GM12878 (cell line): ENCODE measurements at regions of chr1 and their contacts with region 1.

Region 1: DNA sequence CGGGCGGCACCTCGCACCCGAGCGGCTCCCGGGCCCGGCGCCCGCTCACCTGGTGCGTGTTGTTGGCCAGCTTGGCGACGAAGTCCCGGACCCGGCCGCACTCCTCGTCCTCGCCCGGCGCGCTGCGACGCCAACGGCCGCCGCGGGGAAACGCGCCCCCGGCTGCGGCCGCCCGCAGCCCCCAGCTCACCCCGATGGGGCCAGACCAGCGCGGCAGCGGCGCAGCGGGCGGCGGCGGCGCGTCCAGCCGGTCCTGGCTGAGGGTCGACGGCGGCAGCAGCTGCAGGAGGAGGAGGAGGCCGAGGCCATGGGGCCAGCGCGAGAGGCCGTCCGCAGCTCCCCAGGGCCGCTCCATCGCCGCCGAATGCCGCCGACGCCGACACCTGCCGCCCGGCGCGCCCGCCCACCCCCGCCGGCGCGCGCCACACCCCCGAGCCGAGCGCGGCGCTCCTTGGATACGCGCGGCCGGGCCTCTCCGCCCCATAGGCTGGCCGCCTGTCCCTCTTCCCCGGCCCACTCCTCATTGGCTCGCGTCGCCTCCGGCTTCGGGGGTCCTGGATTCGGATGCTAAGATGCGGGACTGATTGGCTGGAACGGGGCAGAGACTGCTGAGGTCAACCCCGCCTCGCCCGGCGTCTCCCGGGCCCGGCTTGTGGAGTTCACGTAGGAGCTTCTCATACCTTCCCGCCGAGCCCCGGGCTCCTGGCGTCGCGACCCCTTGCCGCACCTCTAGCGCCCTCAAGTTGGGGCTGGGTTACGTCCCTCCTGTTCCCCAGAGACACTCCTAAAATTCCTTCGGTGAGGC is at the start of gene SORT1:
- DNase-seq: no peak
- ATAC-seq: peak; percentile 96
- H3K4me3 ChIP-seq: peak within 1 kb of the TSS; percentile 55
- H3K27ac ChIP-seq: no peak within 1 kb of the TSS
- H3K4me1 ChIP-seq: peaks cover 3% of the 10 kb centered on the region
- H3K27me3 ChIP-seq: peaks cover 1 to 4% of the 10 kb centered on the region in 2 experiments; a peak in 3 of 4 replicates
- CTCF ChIP-seq: no peak
- EP300 ChIP-seq: no peak
- POLR2A ChIP-seq: peak; percentile 39; the same call in 1 of the 2 replicates
- RAD21 ChIP-seq: no peak
- polyA plus RNA-seq, gene SORT1: 0.06 to 0.16 TPM

Region 2: GRCh38 chr1:109201123-109201703 is 196.5 kb before region 1 on chr1:
- CTCF ChIA-PET with region 1: interaction called, 19 read pairs
- POLR2A ChIA-PET with region 1: no interaction called
- RAD21 ChIA-PET with region 1: interaction called, 7 read pairs
- SMC1A ChIA-PET with region 1: interaction called, 6 read pairs
- in situ Hi-C with region 1: no loop called
- intact Hi-C with region 1: no loop called
- DNase-seq: no peak
- ATAC-seq: peak; percentile 79
- H3K4me3 ChIP-seq: no peak overlapping the region
- H3K27ac ChIP-seq: no peak overlapping the region
- H3K4me1 ChIP-seq: no peaks in the 10 kb centered on the region
- H3K27me3 ChIP-seq: no peaks in the 10 kb centered on the region; a peak in 1 of 4 replicates
- CTCF ChIP-seq: peak; percentile 60 to 69 (median 67)
- EP300 ChIP-seq: no peak
- POLR2A ChIP-seq: no peak
- RAD21 ChIP-seq: peak; percentile 59

Region 3: DNA sequence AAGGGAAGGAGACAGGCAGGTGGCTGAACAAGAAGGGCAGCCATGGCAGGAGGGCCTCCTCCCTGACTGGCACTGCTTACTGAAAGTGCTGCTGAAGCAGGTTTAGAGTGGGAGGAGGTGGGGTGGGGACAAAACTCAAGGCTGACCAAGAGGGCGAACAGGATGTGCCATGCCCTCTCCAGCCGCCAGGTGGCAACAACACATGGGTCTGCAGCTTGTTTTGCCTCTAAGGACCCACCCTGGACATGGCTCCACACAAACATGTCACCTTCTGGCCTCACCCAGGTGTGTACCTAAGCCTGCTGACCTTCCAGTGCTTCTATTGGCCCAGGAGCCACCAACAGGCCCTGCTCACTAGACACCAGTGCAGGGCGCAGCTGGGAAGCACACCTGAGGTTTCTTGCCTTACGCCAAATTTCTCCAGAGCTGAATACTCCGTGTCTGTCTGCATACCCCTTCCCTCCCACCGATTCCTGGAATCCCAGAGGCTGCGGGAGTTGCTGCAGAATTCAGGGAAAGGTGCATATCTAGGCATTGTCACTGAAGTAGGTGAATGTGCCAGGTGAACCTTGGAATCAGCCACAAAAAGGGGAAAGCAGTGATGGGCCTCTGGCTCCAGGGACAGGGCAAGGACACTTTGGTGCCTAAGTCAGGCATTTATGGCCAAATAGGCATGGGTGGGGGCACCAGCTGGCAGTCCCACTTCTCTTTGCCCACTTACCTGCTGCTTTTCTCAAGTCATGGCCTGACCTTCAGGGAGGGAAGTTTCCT is 120.1 kb before region 1 on chr1:
- CTCF ChIA-PET with region 1: interaction called, 241 read pairs
- POLR2A ChIA-PET with region 1: no interaction called
- RAD21 ChIA-PET with region 1: interaction called, 87 read pairs
- SMC1A ChIA-PET with region 1: interaction called, 113 read pairs
- in situ Hi-C with region 1: no loop called
- intact Hi-C with region 1: loop called (anchors 1 kb)
- DNase-seq: peak; percentile 54
- ATAC-seq: peak; percentile 94
- H3K4me3 ChIP-seq: no peak overlapping the region
- H3K27ac ChIP-seq: no peak overlapping the region
- H3K4me1 ChIP-seq: no peaks in the 10 kb centered on the region; the same call in none of the 2 replicates
- H3K27me3 ChIP-seq: peaks cover 0 to 1% of the 10 kb centered on the region in 2 experiments; a peak in 1 of 4 replicates
- CTCF ChIP-seq: peak; percentile 92 to 97 (median 97); a peak in 5 of 6 replicates
- EP300 ChIP-seq: no peak
- POLR2A ChIP-seq: no peak
- RAD21 ChIP-seq: peak; percentile 76

Region 4: DNA sequence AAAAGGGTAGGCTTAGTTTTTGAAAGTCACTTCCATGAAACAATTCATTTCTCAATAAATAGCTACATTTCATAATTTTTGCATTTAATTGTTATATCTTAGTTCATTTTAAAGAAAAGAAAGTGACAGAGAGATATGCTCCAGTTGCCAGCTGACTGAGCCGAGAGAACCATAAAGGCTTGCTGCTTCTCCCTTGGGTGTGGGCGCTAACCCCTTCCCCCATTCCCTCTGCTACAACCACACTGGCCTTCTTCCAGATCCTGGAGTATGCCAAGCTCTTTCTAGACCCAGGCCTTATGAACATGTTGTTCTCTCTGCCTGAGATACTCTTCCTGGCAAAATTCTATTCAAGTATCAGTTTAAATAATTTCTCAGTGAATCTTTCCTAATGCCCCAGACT is 12.3 kb before region 1 on chr1:
- CTCF ChIA-PET with region 1: interaction called, 33 read pairs
- POLR2A ChIA-PET with region 1: no interaction called
- RAD21 ChIA-PET with region 1: interaction called, 5 read pairs
- SMC1A ChIA-PET with region 1: interaction called, 14 read pairs
- in situ Hi-C with region 1: no loop called
- intact Hi-C with region 1: no loop called
- DNase-seq: no peak
- ATAC-seq: no peak
- H3K4me3 ChIP-seq: no peak overlapping the region
- H3K27ac ChIP-seq: no peak overlapping the region
- H3K4me1 ChIP-seq: 0 out of 2 replicates have a peak, but pooled peaks cover 3% of the 10 kb centered on the region
- H3K27me3 ChIP-seq: no peaks in the 10 kb centered on the region
- CTCF ChIP-seq: no peak
- EP300 ChIP-seq: no peak
- POLR2A ChIP-seq: no peak
- RAD21 ChIP-seq: no peak

Region 5: DNA sequence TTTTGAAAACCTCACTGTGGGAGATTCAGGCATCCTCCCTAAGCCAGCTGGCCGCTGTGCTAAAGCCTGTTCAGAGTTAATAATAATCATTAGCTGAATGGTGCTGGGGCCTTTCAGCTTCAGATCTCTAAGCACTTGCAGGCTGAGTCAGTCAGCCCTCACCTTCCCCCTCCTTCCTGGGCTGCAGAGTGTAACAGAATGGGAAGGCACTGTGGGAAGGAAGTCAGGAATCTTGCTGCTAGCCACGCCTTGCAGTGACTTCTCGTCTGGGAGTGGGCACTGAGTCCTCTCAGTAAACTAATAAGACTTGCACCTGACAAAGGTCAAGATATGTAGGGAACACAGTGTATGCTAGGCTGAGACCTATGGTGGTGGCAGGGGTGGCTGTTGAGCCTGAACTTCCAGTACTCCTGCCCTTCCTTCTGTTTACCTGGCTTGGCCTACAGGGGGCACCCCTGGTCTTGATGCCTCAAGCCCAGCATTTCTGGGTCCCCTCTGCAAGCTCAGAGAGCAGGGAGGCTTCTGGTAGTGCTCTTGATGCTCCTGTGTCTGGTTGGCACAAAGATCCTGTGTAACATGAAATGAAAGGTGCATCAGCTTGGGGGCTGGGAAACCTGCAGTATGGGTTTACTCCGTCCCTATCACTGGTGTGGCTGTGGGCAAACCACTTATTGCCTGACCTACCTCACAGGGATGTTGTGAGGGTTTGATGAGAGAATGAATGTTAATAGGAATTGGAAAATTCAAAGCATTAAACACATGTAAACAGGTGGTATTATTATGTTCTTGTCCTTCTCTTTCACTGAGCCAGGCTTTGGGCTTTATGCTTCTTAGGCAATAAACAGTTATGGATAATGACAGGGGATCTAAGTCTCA is 102.2 kb after region 1 on chr1:
- CTCF ChIA-PET with region 1: interaction called, 13 read pairs
- POLR2A ChIA-PET with region 1: no interaction called
- RAD21 ChIA-PET with region 1: no interaction called
- SMC1A ChIA-PET with region 1: no interaction called
- in situ Hi-C with region 1: no loop called
- intact Hi-C with region 1: no loop called
- DNase-seq: no peak
- ATAC-seq: peak; percentile 71
- H3K4me3 ChIP-seq: no peak overlapping the region
- H3K27ac ChIP-seq: no peak overlapping the region
- H3K4me1 ChIP-seq: peaks cover 1% of the 10 kb centered on the region
- H3K27me3 ChIP-seq: no peaks in the 10 kb centered on the region
- CTCF ChIP-seq: peak; percentile 49 to 57 (median 52); a peak in 5 of 6 replicates
- EP300 ChIP-seq: no peak
- POLR2A ChIP-seq: no peak
- RAD21 ChIP-seq: peak; percentile 50; the same call in 1 of the 2 replicates